Body of pancreas (tissue), 4 donors: ENCODE measurements at regions of chr2 and their contacts with region 1.

Region 1: GRCh38 chr2:18520451-18521425 is 39.7 kb downstream of the RDH14 start:
- DNase-seq: peak; percentile 76 to 87 (median 79)
- ATAC-seq: peak; percentile 85
- H3K4me3 ChIP-seq: no peak overlapping the region
- H3K27ac ChIP-seq: no peak overlapping the region
- H3K4me1 ChIP-seq: no peaks in the 10 kb centered on the region
- H3K27me3 ChIP-seq: no peaks in the 10 kb centered on the region
- CTCF ChIP-seq: peak; percentile 83 to 91 (median 89)
- POLR2A ChIP-seq: no peak

Region 2: DNA sequence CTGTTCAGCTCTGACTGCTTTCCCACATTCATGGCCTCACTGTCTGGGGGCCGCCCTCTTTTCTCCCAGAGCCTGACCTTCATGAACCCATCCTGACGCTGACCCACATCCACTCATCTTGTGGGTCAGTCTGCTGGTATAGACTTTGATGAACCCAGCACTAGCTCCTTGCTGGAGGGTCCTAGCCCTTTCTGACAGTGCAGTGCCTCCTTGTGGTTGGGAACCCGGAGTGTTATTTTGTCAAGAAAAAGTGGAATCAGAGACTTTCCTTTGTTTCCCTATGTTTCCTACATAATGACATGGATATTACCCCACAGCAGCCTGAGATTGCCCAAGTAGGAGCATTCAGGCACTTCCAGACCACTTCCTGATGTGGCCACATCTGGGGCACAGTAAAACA is 857.0 kb after region 1 on chr2:
- intact Hi-C with region 1: loop called (anchors 10 kb)
- DNase-seq: no peak
- ATAC-seq: no peak
- H3K4me3 ChIP-seq: no peak overlapping the region
- H3K27ac ChIP-seq: no peak overlapping the region
- H3K4me1 ChIP-seq: no peaks in the 10 kb centered on the region
- H3K27me3 ChIP-seq: no peaks in the 10 kb centered on the region
- CTCF ChIP-seq: no peak
- POLR2A ChIP-seq: no peak